Ascending aorta (tissue), 2 donors: ENCODE measurements at regions of chr5 and their contacts with region 1.

Region 1: DNA sequence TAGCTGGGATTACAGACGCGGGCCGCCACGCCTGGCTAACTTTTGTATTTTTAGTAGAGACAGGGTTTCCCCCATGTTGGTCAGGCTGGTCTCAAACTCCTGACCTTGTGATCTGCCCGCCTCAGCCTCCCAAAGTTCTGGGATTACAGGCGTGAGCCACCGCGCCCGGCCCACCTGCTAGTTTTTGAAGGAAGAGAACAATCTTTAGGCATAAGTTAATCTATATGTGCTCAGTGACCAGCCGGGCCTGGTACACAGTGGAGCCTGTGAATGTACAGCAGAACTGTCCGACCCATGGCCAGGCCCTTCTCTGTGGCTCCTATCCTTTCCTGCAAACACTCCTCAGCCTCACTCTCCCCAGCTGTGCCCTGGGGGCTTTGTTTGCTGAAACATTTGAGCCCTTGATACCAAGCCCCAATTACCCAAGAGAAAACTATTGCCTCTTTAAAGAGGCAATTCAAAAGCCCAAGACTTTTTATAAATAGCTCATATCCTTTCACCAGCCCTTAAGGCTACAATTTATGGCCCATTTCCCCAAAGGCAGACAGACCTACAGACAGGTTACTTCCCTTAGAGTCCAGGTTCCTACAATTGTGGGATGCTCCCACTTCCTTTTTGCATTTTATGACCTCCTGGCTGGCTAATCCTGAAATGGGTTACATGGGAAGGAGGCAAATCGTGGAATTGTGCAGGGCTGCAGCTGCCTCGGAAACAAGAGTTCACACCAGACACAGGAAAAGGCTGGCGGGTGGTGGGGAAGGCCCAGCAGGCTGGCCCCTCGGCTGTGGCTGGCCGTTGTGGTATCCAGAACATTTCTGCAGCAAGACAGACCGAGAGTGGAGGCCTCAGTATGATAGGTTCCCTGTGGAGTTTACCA is 37.5 kb downstream of the SPRY4 start:
- DNase-seq: no peak
- H3K4me3 ChIP-seq: no peak overlapping the region
- H3K27ac ChIP-seq: peak overlapping the region; percentile 5 to 41
- H3K4me1 ChIP-seq: peaks cover 4 to 7% of the 10 kb centered on the region in 2 donors
- H3K27me3 ChIP-seq: no peaks in the 10 kb centered on the region
- CTCF ChIP-seq: no peak

Region 2: DNA sequence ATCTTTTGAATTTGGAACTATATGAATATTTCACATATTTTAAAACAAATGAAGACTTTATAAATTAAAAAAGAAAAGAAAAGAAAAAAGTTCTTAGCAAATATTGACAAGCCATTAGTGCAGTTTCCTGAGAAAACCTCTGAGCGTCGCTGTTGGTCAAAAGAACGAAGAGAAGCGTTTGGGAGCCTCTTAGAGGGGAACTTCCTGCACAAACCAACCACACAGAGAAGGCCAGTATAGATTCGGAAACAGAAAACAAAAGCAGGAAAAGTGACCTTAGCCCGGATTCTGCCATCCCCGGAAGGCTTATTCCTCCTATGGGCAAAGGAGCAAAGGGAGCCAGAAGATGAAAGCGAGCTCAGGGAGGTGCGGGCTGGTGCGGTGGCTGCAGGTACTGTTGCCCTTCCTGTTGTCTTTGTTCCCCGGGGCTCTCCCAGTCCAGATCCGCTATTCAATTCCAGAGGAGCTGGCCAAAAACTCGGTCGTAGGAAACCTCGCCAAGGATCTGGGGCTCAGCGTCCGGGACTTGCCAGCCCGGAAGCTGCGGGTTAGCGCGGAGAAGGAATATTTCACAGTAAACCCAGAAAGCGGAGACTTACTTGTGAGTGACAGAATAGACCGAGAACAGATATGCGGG is 927.4 kb before region 1 on chr5 and contains the start of gene PCDHGB2:
- intact Hi-C with region 1: no loop called
- DNase-seq: no peak
- H3K4me3 ChIP-seq: peak within 1 kb of the TSS; percentile 18 to 25
- H3K27ac ChIP-seq: no peak within 1 kb of the TSS
- H3K4me1 ChIP-seq: no peaks in the 10 kb centered on the region
- H3K27me3 ChIP-seq: no peaks in the 10 kb centered on the region
- CTCF ChIP-seq: peak in 1 of 3 experiments; percentile 22
- total RNA-seq, gene PCDHGB2: 12.2 TPM

Region 3: GRCh38 chr5:142304013-142304701 is 16.8 kb after region 1 on chr5:
- intact Hi-C with region 1: loop called (anchors 1 kb)
- DNase-seq: peak in 1 of 2 donors; percentile 86
- H3K4me3 ChIP-seq: peak overlapping the region in 1 of 2 donors; percentile 5
- H3K27ac ChIP-seq: peak overlapping the region; percentile 78 to 85
- H3K4me1 ChIP-seq: peaks cover 0 to 16% of the 10 kb centered on the region in 2 donors
- H3K27me3 ChIP-seq: no peaks in the 10 kb centered on the region
- CTCF ChIP-seq: no peak